Activated CD4-positive, alpha-beta memory T cell treated with anti-CD3 and anti-CD28 coated beads, Interleukin-2, amount 10 ng/mL, durations not matched to agents 7 days and 5 days (primary cell): ENCODE measurements at regions of chr12 and their contacts with region 1.

Region 1: DNA sequence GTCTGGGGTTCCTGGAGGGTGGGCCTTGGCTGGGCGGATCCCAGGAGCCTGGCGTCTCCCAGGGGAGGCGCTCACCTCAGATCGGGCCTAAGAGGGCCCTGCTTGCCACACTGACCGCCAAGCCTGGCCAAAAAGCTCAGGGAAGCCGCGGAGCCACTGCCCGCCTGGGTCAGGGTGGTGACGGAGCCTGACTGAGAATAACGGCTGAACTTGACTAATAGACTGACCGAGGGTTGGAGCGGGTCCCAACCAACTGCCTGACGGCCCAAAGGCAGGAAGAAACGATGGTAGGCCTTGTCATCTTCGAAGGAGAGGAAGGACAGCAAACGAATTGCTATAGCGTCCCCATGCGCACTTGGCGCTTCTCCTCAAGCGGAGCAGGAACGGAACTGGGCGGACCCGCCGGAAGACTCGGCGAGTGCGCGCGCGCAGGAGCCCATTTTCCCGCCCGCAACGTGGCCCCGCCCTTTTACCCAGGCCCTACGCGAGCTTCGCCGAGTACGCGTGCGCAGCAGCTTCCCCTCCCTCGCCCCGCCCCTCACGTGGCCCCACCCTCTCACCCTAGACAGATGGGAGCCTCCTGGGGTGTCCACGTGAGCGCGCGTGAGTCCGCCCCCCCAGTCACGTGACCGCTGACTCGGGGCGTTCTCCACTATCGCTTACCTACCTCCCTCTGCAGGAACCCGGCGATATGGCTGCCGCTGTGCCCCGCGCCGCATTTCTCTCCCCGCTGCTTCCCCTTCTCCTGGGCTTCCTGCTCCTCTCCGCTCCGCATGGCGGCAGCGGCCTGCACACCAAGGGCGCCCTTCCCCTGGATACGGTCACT is at the starts of genes ERP29 and TMEM116:
- DNase-seq: peak; percentile 100
- H3K4me3 Mint-ChIP-seq: peak within 1 kb of the TSS; percentile 93
- H3K27ac Mint-ChIP-seq: peak within 1 kb of the TSS; percentile 95
- H3K4me1 Mint-ChIP-seq: peaks cover 53% of the 10 kb centered on the region
- H3K27me3 Mint-ChIP-seq: no peaks in the 10 kb centered on the region
- total RNA-seq, gene ERP29: 169 to 172 TPM
- total RNA-seq, gene TMEM116: 17.8 to 19.7 TPM

Region 2: DNA sequence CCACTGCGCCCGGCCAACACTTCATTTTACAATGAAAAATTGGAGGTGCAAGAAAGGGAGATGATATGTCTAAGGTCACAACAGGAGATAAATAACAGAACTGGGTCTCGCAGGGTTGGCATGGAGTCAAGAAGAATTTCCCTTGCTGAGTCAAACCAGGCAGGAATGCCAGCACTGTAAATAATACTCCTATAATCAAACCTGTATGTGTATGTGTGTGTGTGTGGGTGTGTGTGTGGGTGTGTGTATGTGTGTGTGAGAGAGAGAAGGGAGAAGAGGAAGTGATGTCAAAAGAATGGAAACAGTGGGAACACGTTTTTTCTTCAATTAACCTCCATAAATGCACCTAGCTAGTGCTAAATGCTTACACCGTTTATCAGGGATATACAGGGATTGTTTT is 70.4 kb before region 1 on chr12:
- CTCF ChIA-PET with region 1: interaction called, 62 read pairs
- POLR2A ChIA-PET with region 1: interaction called, 52 read pairs
- DNase-seq: no peak
- H3K4me3 Mint-ChIP-seq: no peak overlapping the region
- H3K27ac Mint-ChIP-seq: no peak overlapping the region
- H3K4me1 Mint-ChIP-seq: peaks cover 18% of the 10 kb centered on the region
- H3K27me3 Mint-ChIP-seq: no peaks in the 10 kb centered on the region

Region 3: DNA sequence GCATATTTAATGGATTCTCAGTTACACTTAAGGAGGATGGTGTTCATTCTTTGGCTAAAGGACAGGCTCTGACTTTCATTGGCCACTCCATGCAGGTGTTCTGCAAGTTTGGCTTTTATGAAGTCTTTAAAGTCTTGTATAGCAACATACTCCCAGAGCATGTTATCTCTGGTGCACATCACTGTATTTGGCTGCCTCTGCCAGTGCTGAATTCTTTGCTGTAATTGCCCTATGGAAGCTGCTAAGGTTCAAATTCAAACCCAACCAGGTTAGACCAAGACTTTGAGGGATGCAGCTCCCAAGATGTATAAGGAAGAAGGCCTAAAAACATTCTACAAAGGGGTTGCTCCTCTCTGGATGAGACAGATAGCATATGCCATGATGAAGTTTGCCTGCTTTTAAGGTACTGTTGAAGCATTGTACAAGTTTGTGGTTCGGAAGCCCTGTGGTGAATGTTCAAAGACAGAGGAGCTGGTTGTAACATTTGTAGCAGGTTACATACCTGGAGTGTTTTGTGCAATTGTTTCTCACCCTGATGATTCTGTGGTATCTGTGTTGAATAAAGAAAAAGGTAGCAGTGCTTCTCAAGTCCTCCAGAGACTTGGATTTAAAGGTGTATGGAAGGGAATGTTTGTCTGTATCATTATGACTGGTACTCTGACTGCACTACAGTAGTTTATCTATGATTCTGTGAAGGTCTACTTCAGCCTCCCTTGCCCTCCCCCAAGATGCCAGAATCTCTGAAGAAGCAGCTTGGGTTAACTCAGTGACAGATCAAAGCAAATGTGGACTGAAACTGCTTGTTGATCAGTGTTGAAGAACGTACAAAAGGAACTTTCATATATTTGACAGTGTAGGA is 19.5 kb before region 1 on chr12:
- CTCF ChIA-PET with region 1: interaction called, 41 read pairs
- POLR2A ChIA-PET with region 1: interaction called, 326 read pairs
- DNase-seq: no peak
- H3K4me3 Mint-ChIP-seq: peak overlapping the region; percentile 79
- H3K27ac Mint-ChIP-seq: peak overlapping the region; percentile 96
- H3K4me1 Mint-ChIP-seq: peaks cover 61% of the 10 kb centered on the region
- H3K27me3 Mint-ChIP-seq: peaks cover 3% of the 10 kb centered on the region

Region 4: GRCh38 chr12:112035219-112035765 is 22.3 kb after region 1 on chr12:
- CTCF ChIA-PET with region 1: interaction called, 3 read pairs
- POLR2A ChIA-PET with region 1: interaction called, 14 read pairs
- DNase-seq: no peak
- H3K4me3 Mint-ChIP-seq: no peak overlapping the region
- H3K27ac Mint-ChIP-seq: no peak overlapping the region
- H3K4me1 Mint-ChIP-seq: peaks cover 4% of the 10 kb centered on the region
- H3K27me3 Mint-ChIP-seq: no peaks in the 10 kb centered on the region

Region 5: GRCh38 chr12:112125250-112125999 is 112.4 kb after region 1 on chr12 and contains the start of gene TRAFD1:
- CTCF ChIA-PET with region 1: interaction called, 9 read pairs
- POLR2A ChIA-PET with region 1: interaction called, 43 read pairs
- DNase-seq: peak; percentile 99
- H3K4me3 Mint-ChIP-seq: peak within 1 kb of the TSS; percentile 89
- H3K27ac Mint-ChIP-seq: peak within 1 kb of the TSS; percentile 81
- H3K4me1 Mint-ChIP-seq: peaks cover 41% of the 10 kb centered on the region
- H3K27me3 Mint-ChIP-seq: peaks cover 3% of the 10 kb centered on the region
- total RNA-seq, gene TRAFD1: 74.8 to 75.5 TPM

Region 6: GRCh38 chr12:112294793-112295192 is 281.8 kb after region 1 on chr12:
- CTCF ChIA-PET with region 1: no interaction called
- POLR2A ChIA-PET with region 1: no interaction called
- DNase-seq: no peak
- H3K4me3 Mint-ChIP-seq: no peak overlapping the region
- H3K27ac Mint-ChIP-seq: no peak overlapping the region
- H3K4me1 Mint-ChIP-seq: peaks cover 6% of the 10 kb centered on the region
- H3K27me3 Mint-ChIP-seq: no peaks in the 10 kb centered on the region